Right cardiac atrium (tissue), 5 donors: ENCODE measurements at regions of chr5 and their contacts with region 1.

Region 1: DNA sequence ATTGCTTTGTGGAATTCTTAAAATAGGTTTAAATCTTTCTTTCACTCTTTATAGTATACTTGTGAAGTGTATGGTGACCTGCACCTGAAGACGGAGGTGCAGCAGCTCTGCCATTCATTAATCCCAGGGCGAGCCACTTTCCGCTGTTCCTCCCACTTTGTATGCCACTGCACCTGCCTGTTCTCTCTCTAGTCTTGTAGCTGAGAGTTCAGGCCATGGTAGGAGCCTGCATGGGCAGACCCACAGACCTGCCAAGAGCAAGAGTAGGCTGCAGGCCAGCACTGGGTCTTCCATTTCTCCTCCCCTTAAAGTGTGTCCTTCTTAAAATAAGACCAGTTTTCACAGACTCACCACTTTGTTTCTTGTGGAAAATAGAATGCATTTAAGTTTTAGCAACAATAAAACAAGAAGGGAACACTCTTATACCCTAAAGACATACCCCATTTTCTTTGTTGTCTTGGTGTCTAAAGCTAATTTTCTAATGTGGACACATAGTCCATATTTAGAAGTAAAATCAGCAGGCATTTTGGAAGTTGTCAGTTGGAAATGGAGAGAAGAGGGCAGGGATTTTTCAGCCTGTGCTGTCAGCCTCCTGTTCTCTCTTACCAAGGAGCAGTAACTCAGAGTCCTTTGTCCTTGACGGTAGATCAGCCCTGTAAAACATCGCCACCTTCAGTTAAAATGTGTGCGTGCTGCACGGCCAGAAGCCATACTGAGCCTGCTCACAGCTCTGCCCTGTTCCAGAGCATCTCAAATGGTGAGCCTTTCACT is 103.2 kb downstream of the SNCAIP start:
- DNase-seq: peak; percentile 38 to 76 (median 63)
- ATAC-seq: peak; percentile 94
- H3K4me3 ChIP-seq: no peak overlapping the region
- H3K27ac ChIP-seq: no peak overlapping the region
- H3K4me1 ChIP-seq: no peaks in the 10 kb centered on the region
- H3K27me3 ChIP-seq: no peaks in the 10 kb centered on the region

Region 2: DNA sequence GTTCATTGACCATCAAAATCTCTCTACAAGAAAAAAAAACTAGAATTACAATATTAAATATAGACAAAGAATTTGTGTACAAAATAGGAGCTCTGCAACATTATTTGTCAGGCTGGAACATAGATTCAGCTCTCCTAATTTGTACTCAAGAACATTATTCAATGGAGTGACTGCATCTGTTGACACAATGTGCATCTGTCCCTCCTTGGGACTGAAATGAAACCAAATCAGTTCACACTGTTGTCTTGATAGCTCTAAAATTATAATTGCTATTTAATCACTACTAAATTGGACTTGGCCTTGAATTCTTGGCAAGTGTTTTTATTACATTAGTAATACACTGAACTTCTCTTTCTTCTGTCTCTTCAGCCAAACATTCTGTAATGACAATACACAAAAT is 515.9 kb before region 1 on chr5:
- intact Hi-C with region 1: no loop called
- DNase-seq: no peak
- ATAC-seq: no peak
- H3K4me3 ChIP-seq: no peak overlapping the region
- H3K27ac ChIP-seq: no peak overlapping the region
- H3K4me1 ChIP-seq: no peaks in the 10 kb centered on the region
- H3K27me3 ChIP-seq: no peaks in the 10 kb centered on the region

Region 3: GRCh38 chr5:122192497-122193496 is 222.4 kb before region 1 on chr5:
- intact Hi-C with region 1: loop called (anchors 2 to 10 kb)
- DNase-seq: no peak
- ATAC-seq: peak; percentile 76 to 81
- H3K4me3 ChIP-seq: no peak overlapping the region
- H3K27ac ChIP-seq: no peak overlapping the region
- H3K4me1 ChIP-seq: no peaks in the 10 kb centered on the region
- H3K27me3 ChIP-seq: no peaks in the 10 kb centered on the region

Region 4: GRCh38 chr5:122311961-122312590 is 103.1 kb before region 1 on chr5 and contains the start of gene SNCAIP:
- intact Hi-C with region 1: loop called in 1 of 4 experiments (anchors 10 kb)
- DNase-seq: peak; percentile 55 to 85 (median 74)
- ATAC-seq: peak; percentile 86 to 89
- H3K4me3 ChIP-seq: peak within 1 kb of the TSS; percentile 97
- H3K27ac ChIP-seq: peak within 1 kb of the TSS; percentile 17
- H3K4me1 ChIP-seq: no peaks in the 10 kb centered on the region
- H3K27me3 ChIP-seq: no peaks in the 10 kb centered on the region
- total RNA-seq, gene SNCAIP: 1.6 to 3.9 (median 2.4) TPM

Region 5: DNA sequence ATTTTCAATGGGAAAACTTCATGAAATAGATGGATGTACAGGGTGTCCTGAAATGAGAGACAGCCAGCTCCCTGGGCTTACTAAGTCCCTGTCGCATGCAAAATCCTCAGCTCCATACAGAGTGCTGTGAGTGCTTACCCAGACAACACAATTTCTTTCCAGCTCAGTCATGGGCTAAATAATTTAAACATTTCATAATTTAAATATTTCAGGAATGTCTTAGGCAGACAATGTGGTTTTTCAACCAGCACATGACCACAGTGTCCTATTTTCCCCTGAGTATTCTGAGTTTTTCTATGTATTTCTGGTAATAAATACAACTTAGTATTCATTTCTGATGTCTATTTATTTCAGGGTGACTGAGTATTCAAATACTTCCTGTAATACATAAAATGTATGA is 171.1 kb after region 1 on chr5:
- intact Hi-C with region 1: no loop called
- DNase-seq: no peak
- ATAC-seq: no peak
- H3K4me3 ChIP-seq: no peak overlapping the region
- H3K27ac ChIP-seq: no peak overlapping the region
- H3K4me1 ChIP-seq: no peaks in the 10 kb centered on the region
- H3K27me3 ChIP-seq: no peaks in the 10 kb centered on the region